Motor neuron (in vitro differentiated cells): ENCODE measurements at regions of chr13 and their contacts with region 1.

Region 1: GRCh38 chr13:91017031-91017668 is 330.3 kb upstream of the MIR17HG start:
- ATAC-seq: peak in 6 of 8 experiments; percentile 44 to 93 (median 67)
- H3K4me3 ChIP-seq: no peak overlapping the region
- H3K27ac ChIP-seq: no peak overlapping the region
- H3K4me1 ChIP-seq: peaks cover 0 to 3% of the 10 kb centered on the region in 2 donors

Region 2: DNA sequence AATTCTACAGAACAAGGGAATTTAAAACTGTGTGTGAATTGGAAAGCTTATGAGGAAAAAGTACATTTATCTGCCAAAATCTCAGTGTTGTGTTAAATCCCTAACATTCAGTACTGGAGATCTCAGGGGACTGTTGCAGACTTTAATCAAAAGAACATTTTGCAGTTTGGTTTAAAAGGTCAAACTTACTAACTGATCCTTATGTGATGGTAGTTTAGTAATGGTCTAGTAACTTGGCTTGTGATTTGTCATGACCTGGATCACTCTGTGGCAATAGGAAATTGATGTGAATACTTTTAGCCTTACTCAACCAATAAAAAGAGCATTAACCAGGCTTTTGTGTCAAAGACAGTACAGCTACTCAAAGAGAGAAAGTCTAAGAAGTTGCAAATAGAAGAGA is 531.7 kb before region 1 on chr13:
- in situ Hi-C with region 1: no loop called
- ATAC-seq: peak in 2 of 8 experiments; percentile 26 to 28
- H3K4me3 ChIP-seq: no peak overlapping the region
- H3K27ac ChIP-seq: no peak overlapping the region
- H3K4me1 ChIP-seq: no peaks in the 10 kb centered on the region

Region 3: GRCh38 chr13:90889906-90890834 is 127.0 kb before region 1 on chr13:
- in situ Hi-C with region 1: loop called in 1 of 9 experiments (anchors 25 kb)
- ATAC-seq: no peak
- H3K4me3 ChIP-seq: no peak overlapping the region
- H3K27ac ChIP-seq: no peak overlapping the region
- H3K4me1 ChIP-seq: no peaks in the 10 kb centered on the region

Region 4: DNA sequence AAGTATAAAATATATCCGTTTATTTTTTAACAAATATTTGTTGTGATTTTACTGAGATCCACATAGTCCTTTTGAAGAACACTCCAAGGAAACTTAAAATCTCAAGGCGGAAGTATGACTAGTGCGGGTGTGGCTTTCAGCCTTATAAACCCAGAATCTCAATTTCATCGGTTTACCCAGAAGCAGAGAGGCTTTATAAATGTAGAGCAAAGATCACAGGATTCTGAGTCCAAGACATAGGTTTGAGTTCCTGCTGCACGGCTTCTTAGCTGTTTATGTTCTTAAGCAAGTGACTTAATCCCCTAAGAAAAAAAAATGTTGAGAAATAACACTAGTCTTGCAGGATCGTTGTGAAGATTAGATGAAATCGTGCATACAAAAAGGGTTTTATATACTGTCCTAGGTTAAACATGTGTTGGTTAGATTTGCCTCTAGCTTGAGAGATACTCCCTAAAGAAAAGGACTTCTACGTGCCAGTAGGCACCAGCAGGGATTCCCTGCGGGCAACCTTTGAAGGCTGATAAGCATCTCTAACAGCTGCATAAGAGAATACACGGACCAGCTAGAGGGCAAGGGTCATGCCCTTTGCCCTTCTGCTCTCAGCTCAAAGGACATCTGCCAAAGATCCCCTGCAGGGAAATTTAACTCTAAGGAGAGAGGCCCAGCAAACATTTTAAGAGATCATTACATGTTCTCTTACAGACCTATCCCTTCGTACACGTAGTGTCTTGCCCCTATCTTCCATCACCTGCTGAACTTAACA is 200.0 kb after region 1 on chr13:
- in situ Hi-C with region 1: no loop called
- ATAC-seq: no peak
- H3K4me3 ChIP-seq: no peak overlapping the region
- H3K27ac ChIP-seq: no peak overlapping the region
- H3K4me1 ChIP-seq: peaks cover 0 to 10% of the 10 kb centered on the region in 2 donors